ENCODE measurements at regions of chr15 and their contacts with region 1.

Region 1: GRCh38 chr15:35306361-35306981 is 221.4 kb upstream of the NANOGP8 start:
- DNase-seq: peak; percentile 2
- H3K4me3 Mint-ChIP-seq: peak overlapping the region; percentile 19
- H3K27ac Mint-ChIP-seq: peak overlapping the region; percentile 97
- H3K4me1 Mint-ChIP-seq: peaks cover 14% of the 10 kb centered on the region
- H3K27me3 Mint-ChIP-seq: no peaks in the 10 kb centered on the region
- CTCF ChIP-seq: no peak

Region 2: DNA sequence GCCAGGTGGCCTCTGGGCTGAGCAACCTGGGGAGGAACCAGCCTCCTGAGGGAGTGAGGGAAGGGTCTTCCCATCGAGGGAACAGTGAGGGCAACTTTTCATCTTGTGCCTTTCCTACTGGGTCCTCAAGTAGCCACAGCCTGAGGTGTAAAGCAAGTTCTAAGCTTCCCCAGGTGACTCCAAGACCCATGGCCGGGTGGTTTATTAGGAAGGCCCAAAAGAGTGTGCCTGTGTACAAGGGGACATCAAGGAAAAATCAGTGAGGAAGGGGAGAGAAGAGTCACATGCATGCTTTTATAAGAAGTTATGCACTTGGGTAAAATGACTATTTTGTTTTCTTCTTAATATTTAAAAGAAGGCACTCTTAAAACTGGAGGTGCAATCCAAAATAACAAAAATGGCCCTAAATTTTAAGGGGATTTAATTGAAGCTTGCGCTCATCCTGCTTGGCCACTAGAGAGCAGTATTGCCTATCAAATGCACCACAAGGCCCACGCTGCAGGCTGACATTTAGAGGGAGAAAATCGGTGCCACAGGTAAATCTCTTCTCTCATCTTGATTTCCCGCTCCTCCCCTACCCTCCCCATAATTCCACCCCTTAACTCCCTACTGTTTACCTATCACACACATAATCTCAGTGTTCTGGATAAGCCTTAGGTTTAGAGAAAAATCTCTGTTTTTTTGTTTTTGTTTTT is 228.1 kb before region 1 on chr15:
- CTCF ChIA-PET with region 1: no interaction called
- intact Hi-C with region 1: loop called (anchors 10 kb)
- DNase-seq: peak; percentile 6
- H3K4me3 Mint-ChIP-seq: no peak overlapping the region
- H3K27ac Mint-ChIP-seq: no peak overlapping the region
- H3K4me1 Mint-ChIP-seq: peaks cover 5% of the 10 kb centered on the region
- H3K27me3 Mint-ChIP-seq: no peaks in the 10 kb centered on the region
- CTCF ChIP-seq: peak; percentile 24

Region 3: DNA sequence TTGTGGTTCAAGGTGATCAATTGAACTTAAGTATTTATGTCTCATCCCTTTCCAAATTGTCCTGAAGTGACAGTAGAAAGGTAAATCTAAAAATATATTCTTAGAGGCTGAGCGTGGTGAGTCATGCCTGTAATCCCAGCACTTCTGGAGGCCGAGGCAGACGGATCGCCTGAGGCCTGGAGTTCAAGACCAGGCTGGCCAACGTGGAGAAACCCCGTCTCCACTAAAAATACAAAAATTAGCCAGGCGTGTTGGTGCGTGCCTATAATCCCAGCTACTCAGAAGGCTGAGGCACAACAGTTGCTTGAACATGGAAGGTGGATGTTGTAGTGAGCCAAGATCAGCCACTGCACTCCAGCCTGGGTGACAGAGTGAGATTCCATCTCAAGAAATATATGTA is 12.9 kb after region 1 on chr15:
- CTCF ChIA-PET with region 1: no interaction called
- intact Hi-C with region 1: no loop called
- DNase-seq: no peak
- H3K4me3 Mint-ChIP-seq: no peak overlapping the region
- H3K27ac Mint-ChIP-seq: no peak overlapping the region
- H3K4me1 Mint-ChIP-seq: no peaks in the 10 kb centered on the region
- H3K27me3 Mint-ChIP-seq: no peaks in the 10 kb centered on the region
- CTCF ChIP-seq: no peak